ENCODE measurements at regions of chr17 and their contacts with region 1.

Region 1: DNA sequence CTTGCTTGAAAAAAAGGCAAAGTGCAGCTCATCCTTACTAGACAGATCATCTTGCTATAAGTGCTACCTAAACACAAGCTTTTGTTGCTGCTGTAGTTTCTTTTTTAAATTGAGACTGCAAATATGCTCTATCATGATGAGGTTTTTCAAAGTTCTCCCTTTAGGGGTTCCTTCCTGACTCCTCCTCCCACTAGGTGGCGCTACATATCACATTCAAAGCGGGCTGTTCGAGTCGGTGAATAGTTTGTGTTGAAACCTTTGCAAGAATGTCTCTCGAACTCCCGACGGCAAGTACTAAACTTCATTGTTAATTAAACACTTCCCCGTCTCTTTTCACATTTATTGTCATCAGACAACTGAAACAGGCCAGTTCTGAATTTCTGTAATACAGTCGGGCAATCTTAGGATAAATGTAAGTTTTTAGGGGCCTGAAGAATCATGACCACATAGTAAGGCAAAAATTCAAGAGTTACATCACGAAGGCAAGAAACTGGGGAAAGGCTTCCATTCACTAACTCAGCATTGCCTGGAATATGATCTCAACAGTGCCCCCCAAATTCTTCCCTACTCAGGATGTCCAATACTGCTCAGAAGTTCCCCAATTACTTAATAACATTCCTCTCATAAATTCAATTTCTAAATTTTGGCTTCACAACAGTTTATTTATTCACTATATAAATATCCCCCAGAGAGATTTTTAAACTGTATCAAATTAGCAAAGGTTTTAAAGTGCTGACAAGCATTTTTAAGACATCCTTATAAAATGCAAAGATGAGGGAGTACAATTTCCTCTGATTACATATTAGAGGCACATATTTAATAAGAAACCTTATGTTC is 6.7 kb downstream of the HS3ST3A1 start:
- DNase-seq: peak; percentile 20
- ATAC-seq: no peak
- H3K4me3 Mint-ChIP-seq: no peak overlapping the region
- H3K27ac Mint-ChIP-seq: no peak overlapping the region
- H3K4me1 Mint-ChIP-seq: peaks cover 2% of the 10 kb centered on the region
- H3K27me3 Mint-ChIP-seq: peaks cover 32% of the 10 kb centered on the region
- CTCF ChIP-seq: peak; percentile 91

Region 2: GRCh38 chr17:13609936-13610335 is 15.0 kb after region 1 on chr17:
- CTCF ChIA-PET with region 1: no interaction called
- POLR2A ChIA-PET with region 1: no interaction called
- intact Hi-C with region 1: no loop called
- DNase-seq: no peak
- ATAC-seq: no peak
- H3K4me3 Mint-ChIP-seq: no peak overlapping the region
- H3K27ac Mint-ChIP-seq: no peak overlapping the region
- H3K4me1 Mint-ChIP-seq: no peaks in the 10 kb centered on the region
- H3K27me3 Mint-ChIP-seq: peaks cover 10% of the 10 kb centered on the region
- CTCF ChIP-seq: no peak

Region 3: DNA sequence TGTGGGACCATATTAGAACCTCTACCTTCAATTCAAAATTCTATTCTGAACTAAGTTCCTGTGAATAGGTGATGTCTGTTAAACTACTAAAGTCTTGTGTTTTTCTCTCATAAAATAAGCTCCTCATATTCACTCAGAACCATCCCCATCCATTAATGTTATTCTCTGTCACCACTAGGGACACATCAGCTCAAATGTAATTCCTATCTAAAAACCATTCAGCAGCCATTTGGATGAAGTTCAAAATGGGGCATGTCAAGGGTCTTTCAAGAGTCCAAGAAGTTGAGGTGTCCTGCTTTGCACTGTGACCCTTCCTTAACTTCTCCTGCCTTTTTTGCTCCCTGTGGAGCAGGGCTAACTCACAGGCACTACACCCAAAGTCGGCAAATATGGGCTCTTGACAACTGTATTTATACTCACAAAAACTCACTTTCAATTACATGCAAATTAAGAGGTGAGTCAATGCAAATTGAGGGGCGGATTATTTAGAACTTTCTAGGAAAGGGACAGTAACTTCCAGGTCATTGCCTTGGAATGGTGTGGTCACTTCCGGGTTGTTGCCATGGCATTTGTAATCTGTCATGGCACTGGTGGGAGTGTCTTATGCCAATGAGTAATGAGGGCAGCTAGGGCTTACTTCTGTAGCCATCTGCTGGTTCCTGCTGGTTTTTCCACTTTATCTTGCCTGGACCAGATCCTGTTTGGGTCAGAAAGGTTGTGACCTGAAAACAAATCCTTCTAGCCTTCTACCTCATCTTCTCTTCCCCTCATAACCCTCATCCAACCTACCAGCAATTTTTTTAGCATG is 346.1 kb after region 1 on chr17:
- CTCF ChIA-PET with region 1: interaction called, 5 read pairs
- POLR2A ChIA-PET with region 1: no interaction called
- intact Hi-C with region 1: loop called (anchors 2 kb)
- DNase-seq: no peak
- ATAC-seq: no peak
- H3K4me3 Mint-ChIP-seq: no peak overlapping the region
- H3K27ac Mint-ChIP-seq: no peak overlapping the region
- H3K4me1 Mint-ChIP-seq: peaks cover 19% of the 10 kb centered on the region
- H3K27me3 Mint-ChIP-seq: no peaks in the 10 kb centered on the region
- CTCF ChIP-seq: no peak

Region 4: GRCh38 chr17:14211801-14212200 is 616.8 kb after region 1 on chr17:
- CTCF ChIA-PET with region 1: no interaction called
- POLR2A ChIA-PET with region 1: no interaction called
- intact Hi-C with region 1: loop called (anchors 10 kb)
- DNase-seq: peak; percentile 21
- ATAC-seq: no peak
- H3K4me3 Mint-ChIP-seq: no peak overlapping the region
- H3K27ac Mint-ChIP-seq: no peak overlapping the region
- H3K4me1 Mint-ChIP-seq: no peaks in the 10 kb centered on the region
- H3K27me3 Mint-ChIP-seq: no peaks in the 10 kb centered on the region
- CTCF ChIP-seq: no peak

Region 5: GRCh38 chr17:14553855-14554254 is 958.9 kb after region 1 on chr17:
- CTCF ChIA-PET with region 1: no interaction called
- POLR2A ChIA-PET with region 1: no interaction called
- intact Hi-C with region 1: loop called (anchors 2 kb)
- DNase-seq: no peak
- ATAC-seq: no peak
- H3K4me3 Mint-ChIP-seq: no peak overlapping the region
- H3K27ac Mint-ChIP-seq: no peak overlapping the region
- H3K4me1 Mint-ChIP-seq: peaks cover 3% of the 10 kb centered on the region
- H3K27me3 Mint-ChIP-seq: peaks cover 1% of the 10 kb centered on the region
- CTCF ChIP-seq: no peak

Region 6: GRCh38 chr17:14813649-14814365 is 1218.8 kb after region 1 on chr17:
- CTCF ChIA-PET with region 1: no interaction called
- POLR2A ChIA-PET with region 1: no interaction called
- intact Hi-C with region 1: loop called (anchors 2 kb)
- DNase-seq: no peak
- ATAC-seq: no peak
- H3K4me3 Mint-ChIP-seq: no peak overlapping the region
- H3K27ac Mint-ChIP-seq: no peak overlapping the region
- H3K4me1 Mint-ChIP-seq: no peaks in the 10 kb centered on the region
- H3K27me3 Mint-ChIP-seq: peaks cover 9% of the 10 kb centered on the region
- CTCF ChIP-seq: no peak

Region 7: DNA sequence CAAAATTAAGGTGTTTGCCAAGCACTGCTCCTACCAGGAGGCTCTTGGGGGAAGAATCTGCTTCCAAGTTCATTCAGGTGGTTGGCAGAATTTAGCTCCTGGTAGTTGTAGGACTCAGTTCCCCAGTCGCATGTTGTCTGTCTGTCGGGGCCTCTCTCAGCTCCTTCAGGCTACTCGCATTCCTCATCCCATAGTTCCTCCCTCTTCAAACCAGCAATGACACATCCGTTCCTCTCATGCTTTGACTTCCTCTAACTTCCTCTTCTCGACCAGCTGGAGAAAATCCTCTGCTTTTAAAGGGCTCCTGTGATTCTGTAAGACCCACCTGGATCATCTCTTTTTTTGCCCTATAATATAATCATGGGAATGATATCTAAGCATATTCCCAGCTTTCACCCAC is 1562.1 kb after region 1 on chr17:
- CTCF ChIA-PET with region 1: interaction called, 3 read pairs
- POLR2A ChIA-PET with region 1: no interaction called
- intact Hi-C with region 1: loop called (anchors 5 kb)
- DNase-seq: no peak
- ATAC-seq: no peak
- H3K4me3 Mint-ChIP-seq: no peak overlapping the region
- H3K27ac Mint-ChIP-seq: no peak overlapping the region
- H3K4me1 Mint-ChIP-seq: no peaks in the 10 kb centered on the region
- H3K27me3 Mint-ChIP-seq: peaks cover 23% of the 10 kb centered on the region
- CTCF ChIP-seq: no peak

Measured in activated B cell treated with CpG ODN at 0.5 μM for 24 hours (primary cell).